ENCODE measurements at regions of chr1 and their contacts with region 1.

Region 1: GRCh38 chr1:161382214-161383019 is 14.7 kb upstream of the CFAP126 start:
- DNase-seq: no peak
- H3K4me3 Mint-ChIP-seq: no peak overlapping the region
- H3K27ac Mint-ChIP-seq: no peak overlapping the region
- H3K4me1 Mint-ChIP-seq: peaks cover 21% of the 10 kb centered on the region
- H3K27me3 Mint-ChIP-seq: no peaks in the 10 kb centered on the region

Region 2: GRCh38 chr1:161192476-161193465 is 189.6 kb before region 1 on chr1:
- intact Hi-C with region 1: loop called (anchors 1 kb)
- DNase-seq: peak; percentile 92
- H3K4me3 Mint-ChIP-seq: no peak overlapping the region
- H3K27ac Mint-ChIP-seq: peak overlapping the region; percentile 87
- H3K4me1 Mint-ChIP-seq: peaks cover 31% of the 10 kb centered on the region
- H3K27me3 Mint-ChIP-seq: no peaks in the 10 kb centered on the region

Region 3: GRCh38 chr1:161305867-161306519 is 76.4 kb before region 1 on chr1:
- intact Hi-C with region 1: loop called (anchors 2 kb)
- DNase-seq: peak; percentile 96
- H3K4me3 Mint-ChIP-seq: peak overlapping the region; percentile 99
- H3K27ac Mint-ChIP-seq: peak overlapping the region; percentile 92
- H3K4me1 Mint-ChIP-seq: peaks cover 38% of the 10 kb centered on the region
- H3K27me3 Mint-ChIP-seq: no peaks in the 10 kb centered on the region

Measured in activated CD4-positive, alpha-beta T cell treated with anti-CD3 and anti-CD28 coated beads, Interleukin-2, amount 10 ng/mL, durations not matched to agents 24 days and 14 days (primary cell).